Activated T-helper 1 cell treated with anti-CD3 and anti-CD28 coated beads, Interleukin-12 subunit alpha, Interleukin-12 subunit beta, Interleukin-2, Interleukin-4 antibody, amounts not matched to agents 30 ng/mL and 10 ng/mL and 1 ng/mL, durations not matched to agents 14 hours and 24 hours and 36 hours (primary cell): ENCODE measurements at regions of chrX and their contacts with region 1.

Region 1: DNA sequence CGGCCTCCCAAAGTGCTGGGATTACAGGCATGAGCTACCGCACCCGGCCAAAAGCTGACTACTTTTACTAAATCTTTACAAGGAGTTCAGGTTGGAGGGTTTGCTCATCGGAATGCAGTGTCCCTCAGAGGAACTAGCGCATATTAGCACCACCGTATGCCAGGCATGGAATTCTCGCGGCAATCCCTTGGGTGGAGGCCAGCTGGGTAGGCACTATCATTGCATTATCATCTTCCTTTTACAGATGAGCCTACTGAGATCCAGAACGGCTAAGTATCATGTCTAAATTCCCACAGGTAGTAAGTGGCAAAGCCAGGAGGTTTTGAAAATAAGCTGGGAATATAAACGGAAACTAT is 6.1 kb upstream of the CXorf66 start:
- DNase-seq: no peak
- H3K4me3 Mint-ChIP-seq: no peak overlapping the region
- H3K27ac Mint-ChIP-seq: no peak overlapping the region
- H3K4me1 Mint-ChIP-seq: no peaks in the 10 kb centered on the region
- H3K27me3 Mint-ChIP-seq: peaks cover 3% of the 10 kb centered on the region

Region 2: GRCh38 chrX:138128027-138128671 is 1843.2 kb before region 1 on chrX:
- intact Hi-C with region 1: loop called (anchors 5 kb)
- DNase-seq: no peak
- H3K4me3 Mint-ChIP-seq: no peak overlapping the region
- H3K27ac Mint-ChIP-seq: no peak overlapping the region
- H3K4me1 Mint-ChIP-seq: no peaks in the 10 kb centered on the region
- H3K27me3 Mint-ChIP-seq: no peaks in the 10 kb centered on the region